Left lung (tissue), 14 donors: ENCODE measurements at regions of chr15 and their contacts with region 1.

Region 1: DNA sequence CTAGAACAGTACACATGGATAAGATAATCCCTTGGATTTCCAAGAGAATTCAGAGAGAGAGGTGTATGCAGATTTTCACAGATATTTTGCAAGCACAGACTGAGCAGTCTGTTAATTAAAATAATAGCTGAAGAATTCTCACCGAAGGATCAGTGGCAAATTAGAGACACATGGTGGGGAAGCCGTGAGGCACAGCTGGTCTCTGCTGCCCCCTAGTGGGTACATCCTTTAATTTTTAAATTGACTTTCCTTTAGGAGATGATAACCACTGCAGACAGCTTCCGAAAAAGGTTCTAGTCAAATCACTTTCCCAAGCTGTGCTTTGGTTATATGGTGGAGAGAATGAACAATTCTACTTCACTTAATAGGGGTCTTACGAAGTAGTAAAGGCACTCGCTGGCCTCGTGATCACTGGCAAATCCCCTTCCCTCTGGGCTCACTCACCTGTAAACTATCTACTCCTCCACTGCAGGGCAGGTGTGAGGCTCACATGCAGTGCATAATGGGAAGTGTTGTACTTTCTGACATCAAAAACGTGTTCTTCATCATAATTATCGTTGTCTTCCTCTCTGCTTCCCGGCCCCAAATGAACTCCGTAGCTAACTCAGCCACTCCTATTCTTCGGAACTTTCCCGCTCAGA is 19.5 kb downstream of the MESD start:
- DNase-seq: peak in 2 of 4 donors; percentile 53 to 74
- ATAC-seq: peak; percentile 94
- H3K4me3 ChIP-seq: no peak overlapping the region
- H3K27ac ChIP-seq: no peak overlapping the region
- H3K4me1 ChIP-seq: no peaks in the 10 kb centered on the region
- H3K27me3 ChIP-seq: no peaks in the 10 kb centered on the region
- CTCF ChIP-seq: peak; percentile 63 to 93

Region 2: DNA sequence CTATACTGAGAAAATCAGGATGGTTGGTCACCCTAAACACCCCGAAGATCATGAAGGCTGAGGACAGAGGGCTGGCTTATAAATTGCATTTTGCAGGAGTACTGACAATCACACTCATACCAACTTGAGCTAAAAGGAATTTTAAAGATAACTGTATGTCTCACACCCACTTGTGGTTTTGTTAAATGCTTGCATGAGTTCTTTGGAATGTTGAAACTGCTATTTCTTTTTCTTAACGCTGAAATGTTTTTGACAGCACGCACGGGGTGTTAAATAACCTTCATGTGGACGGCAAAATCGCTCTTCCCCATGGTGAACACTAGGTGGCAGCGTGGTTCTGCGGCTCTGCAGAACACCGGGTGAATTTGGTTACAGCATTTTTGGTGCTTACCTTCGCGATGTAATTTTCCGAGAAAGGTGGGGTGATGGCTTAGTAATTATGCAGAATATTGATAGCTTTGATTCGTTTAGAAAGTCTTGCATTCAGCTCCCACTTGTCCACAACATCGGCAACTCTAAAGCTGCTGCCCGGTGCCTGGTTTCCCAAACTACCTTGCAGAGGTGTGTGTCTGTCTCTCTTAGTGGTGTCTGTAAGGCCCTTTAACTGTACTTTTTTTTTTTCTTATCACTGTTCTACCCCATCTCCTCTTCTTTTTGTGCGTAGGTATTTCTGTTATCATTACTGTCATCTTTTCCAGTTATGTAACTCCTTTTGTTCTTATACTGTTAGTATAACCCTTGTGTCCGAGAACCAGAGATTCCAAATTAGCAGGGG is 514.3 kb before region 1 on chr15:
- intact Hi-C with region 1: loop called in 1 of 2 experiments (anchors 5 kb)
- DNase-seq: peak in 3 of 4 donors; percentile 53 to 84 (median 72)
- ATAC-seq: peak; percentile 93
- H3K4me3 ChIP-seq: no peak overlapping the region
- H3K27ac ChIP-seq: no peak overlapping the region
- H3K4me1 ChIP-seq: peaks cover 9 to 27% of the 10 kb centered on the region in 2 donors
- H3K27me3 ChIP-seq: peaks cover 0 to 8% of the 10 kb centered on the region in 2 donors
- CTCF ChIP-seq: peak; percentile 86 to 88

Region 3: GRCh38 chr15:80776420-80777045 is 193.6 kb before region 1 on chr15:
- intact Hi-C with region 1: loop called in 1 of 2 experiments (anchors 5 kb)
- DNase-seq: peak in 3 of 4 donors; percentile 65 to 87 (median 73)
- ATAC-seq: peak; percentile 63
- H3K4me3 ChIP-seq: no peak overlapping the region
- H3K27ac ChIP-seq: peak overlapping the region; percentile 33 to 75
- H3K4me1 ChIP-seq: peaks cover 19 to 46% of the 10 kb centered on the region in 2 donors
- H3K27me3 ChIP-seq: peaks cover 12 to 45% of the 10 kb centered on the region in 2 donors
- CTCF ChIP-seq: peak; percentile 67 to 83

Region 4: DNA sequence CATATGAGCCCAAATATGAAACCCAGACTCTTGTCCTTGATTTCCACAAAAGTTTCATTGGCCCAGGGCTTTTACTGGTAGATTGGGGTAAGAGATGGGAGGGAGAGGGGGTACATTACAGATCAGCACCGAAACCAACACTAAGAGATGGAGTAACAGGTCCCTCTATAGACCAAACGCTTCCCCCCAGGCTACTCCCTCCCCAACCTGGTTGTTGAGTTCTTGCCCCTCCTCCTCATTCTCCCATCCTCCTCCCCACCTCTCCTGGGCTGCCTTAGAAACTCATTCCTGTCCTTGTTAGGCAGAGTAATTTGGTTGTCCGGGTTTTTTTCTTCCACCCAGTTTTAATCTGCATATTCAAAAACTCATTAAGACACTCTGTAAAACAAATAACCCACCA is 54.7 kb before region 1 on chr15:
- intact Hi-C with region 1: no loop called
- DNase-seq: no peak
- ATAC-seq: no peak
- H3K4me3 ChIP-seq: no peak overlapping the region
- H3K27ac ChIP-seq: no peak overlapping the region
- H3K4me1 ChIP-seq: no peaks in the 10 kb centered on the region
- H3K27me3 ChIP-seq: no peaks in the 10 kb centered on the region
- CTCF ChIP-seq: no peak

Region 5: DNA sequence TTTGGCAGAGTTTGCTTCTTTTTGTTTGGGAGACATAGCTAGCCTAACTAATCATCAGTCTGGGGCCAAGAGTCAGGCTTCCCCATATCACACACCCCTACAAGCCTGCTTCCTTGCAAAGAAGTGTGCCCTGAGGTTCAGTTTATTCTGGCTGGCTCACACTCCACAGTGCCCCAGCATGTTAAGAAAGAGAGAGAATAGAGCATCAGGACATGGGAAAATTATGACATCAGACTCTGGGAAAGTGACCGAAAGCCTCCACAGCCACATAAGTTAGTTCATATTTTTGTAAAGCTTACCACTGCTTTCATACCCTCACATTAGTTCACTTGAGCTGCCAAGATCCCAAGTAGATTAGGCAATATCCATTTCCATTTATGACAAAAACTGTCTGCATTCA is 101.0 kb after region 1 on chr15:
- intact Hi-C with region 1: no loop called
- DNase-seq: peak in 1 of 4 donors; percentile 28
- ATAC-seq: no peak
- H3K4me3 ChIP-seq: no peak overlapping the region
- H3K27ac ChIP-seq: no peak overlapping the region
- H3K4me1 ChIP-seq: no peaks in the 10 kb centered on the region
- H3K27me3 ChIP-seq: no peaks in the 10 kb centered on the region
- CTCF ChIP-seq: no peak